Endothelial cell of umbilical vein (primary cell): ENCODE measurements at regions of chr4 and their contacts with region 1.

Region 1: DNA sequence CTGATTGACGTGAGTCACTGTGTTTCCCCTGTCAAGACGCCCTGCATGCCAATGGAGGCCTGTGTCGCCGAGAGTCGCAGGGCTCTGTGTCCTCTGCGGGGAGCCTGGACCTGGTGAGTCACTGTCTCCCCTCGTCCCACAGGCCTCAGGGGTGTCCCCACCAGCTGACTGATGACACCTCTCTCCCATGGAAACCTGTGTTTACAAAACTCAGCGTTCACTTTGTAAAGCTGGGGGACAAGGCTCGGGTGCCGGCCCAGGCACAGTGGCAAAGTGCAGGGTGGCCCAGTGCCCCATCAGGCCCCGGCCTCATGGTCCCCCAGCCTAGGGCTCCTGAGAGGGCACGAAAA is 21.2 kb upstream of the HGFAC start:
- DNase-seq: no peak
- H3K4me3 ChIP-seq: no peak overlapping the region
- H3K27ac ChIP-seq: no peak overlapping the region
- H3K4me1 ChIP-seq: no peaks in the 10 kb centered on the region
- H3K27me3 ChIP-seq: no peaks in the 10 kb centered on the region
- CTCF ChIP-seq: no peak
- POLR2A ChIP-seq: no peak

Region 2: GRCh38 chr4:3248811-3249661 is 171.5 kb before region 1 on chr4 and contains the start of gene MSANTD1:
- CTCF ChIA-PET with region 1: no interaction called
- POLR2A ChIA-PET with region 1: no interaction called
- dilution Hi-C with region 1: no loop called
- intact Hi-C with region 1: loop called (anchors 10 kb)
- DNase-seq: no peak
- H3K4me3 ChIP-seq: no peak within 1 kb of the TSS
- H3K27ac ChIP-seq: no peak within 1 kb of the TSS
- H3K4me1 ChIP-seq: no peaks in the 10 kb centered on the region
- H3K27me3 ChIP-seq: no peaks in the 10 kb centered on the region
- CTCF ChIP-seq: no peak
- POLR2A ChIP-seq: no peak
- total RNA-seq, gene MSANTD1: 0.88 and 1.2 TPM in 2 replicates